Mucosa of descending colon (tissue), 3 donors: ENCODE measurements at regions of chr10 and their contacts with region 1.

Region 1: GRCh38 chr10:47047671-47048525 is 136.7 kb downstream of the PTPN20 start:
- DNase-seq: peak; percentile 77 to 89 (median 86)
- ATAC-seq: peak; percentile 87
- H3K4me3 ChIP-seq: no peak overlapping the region
- H3K4me1 ChIP-seq: no peaks in the 10 kb centered on the region
- CTCF ChIP-seq: peak; percentile 79

Region 2: GRCh38 chr10:47318706-47319105 is 270.8 kb after region 1 on chr10:
- intact Hi-C with region 1: loop called in 1 of 2 experiments (anchors 5 kb)
- DNase-seq: no peak
- ATAC-seq: no peak
- H3K4me3 ChIP-seq: no peak overlapping the region
- H3K4me1 ChIP-seq: no peaks in the 10 kb centered on the region
- CTCF ChIP-seq: no peak